Panc1 (cell line): ENCODE measurements at regions of chr12 and their contacts with region 1.

Region 1: GRCh38 chr12:123813349-123813748 is 51.2 kb downstream of the DNAH10 start:
- DNase-seq: no peak
- ATAC-seq: no peak
- H3K4me3 ChIP-seq: no peak overlapping the region
- H3K27ac ChIP-seq: no peak overlapping the region
- H3K4me1 ChIP-seq: no peaks in the 10 kb centered on the region
- H3K27me3 ChIP-seq: no peaks in the 10 kb centered on the region
- CTCF ChIP-seq: no peak

Region 2: DNA sequence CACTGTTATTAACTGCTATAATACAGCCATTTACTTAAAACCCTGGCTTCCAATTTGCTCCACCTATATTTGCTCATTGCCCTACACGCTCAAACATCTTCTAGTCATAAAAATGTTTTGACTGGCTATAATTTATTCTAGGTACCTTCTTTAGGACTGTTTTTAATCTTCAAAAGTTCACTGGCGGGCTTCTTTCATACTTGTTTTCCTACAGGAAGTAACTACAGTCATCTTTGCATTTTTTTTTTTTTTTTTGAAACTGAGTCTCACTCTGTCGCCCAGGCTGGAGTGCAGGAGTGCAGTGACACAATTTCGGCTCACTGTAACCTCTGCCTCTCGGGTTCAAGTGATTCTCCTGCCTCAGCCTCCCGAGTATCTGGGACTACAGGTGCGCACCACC is 612.9 kb before region 1 on chr12:
- CTCF ChIA-PET with region 1: no interaction called
- POLR2A ChIA-PET with region 1: no interaction called
- in situ Hi-C with region 1: no loop called
- intact Hi-C with region 1: no loop called
- DNase-seq: no peak
- ATAC-seq: no peak
- H3K4me3 ChIP-seq: no peak overlapping the region
- H3K27ac ChIP-seq: no peak overlapping the region
- H3K4me1 ChIP-seq: no peaks in the 10 kb centered on the region
- H3K27me3 ChIP-seq: no peaks in the 10 kb centered on the region
- CTCF ChIP-seq: no peak

Region 3: GRCh38 chr12:123519141-123520001 is 294.0 kb before region 1 on chr12:
- CTCF ChIA-PET with region 1: no interaction called
- POLR2A ChIA-PET with region 1: no interaction called
- in situ Hi-C with region 1: no loop called
- intact Hi-C with region 1: no loop called
- DNase-seq: no peak
- ATAC-seq: peak; percentile 47; the same call in 1 of the 2 replicates
- H3K4me3 ChIP-seq: no peak overlapping the region
- H3K27ac ChIP-seq: no peak overlapping the region
- H3K4me1 ChIP-seq: peaks cover 4% of the 10 kb centered on the region; the same call in 1 of the 2 replicates
- H3K27me3 ChIP-seq: no peaks in the 10 kb centered on the region
- CTCF ChIP-seq: no peak

Region 4: DNA sequence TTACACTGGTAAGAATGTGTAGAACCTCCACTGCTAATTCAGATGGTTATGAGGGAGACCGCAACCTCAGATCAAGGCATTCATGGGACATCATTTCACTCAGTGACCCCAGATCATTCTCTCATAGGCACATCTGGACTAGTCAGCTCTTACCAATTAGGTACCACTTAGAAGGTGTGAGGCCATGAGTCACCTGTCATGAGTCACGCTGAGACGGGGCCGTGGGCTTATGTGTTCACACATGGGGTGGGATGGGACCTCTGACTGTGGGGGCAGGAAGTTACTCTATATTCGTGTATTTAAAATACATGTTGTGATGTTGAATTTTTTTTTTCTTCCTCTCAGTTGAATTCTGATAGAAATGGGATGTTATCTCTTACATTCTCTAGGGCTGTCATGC is 103.4 kb after region 1 on chr12:
- CTCF ChIA-PET with region 1: no interaction called
- POLR2A ChIA-PET with region 1: interaction called, 11 read pairs
- in situ Hi-C with region 1: no loop called
- intact Hi-C with region 1: no loop called
- DNase-seq: no peak
- ATAC-seq: no peak
- H3K4me3 ChIP-seq: no peak overlapping the region
- H3K27ac ChIP-seq: no peak overlapping the region
- H3K4me1 ChIP-seq: no peaks in the 10 kb centered on the region
- H3K27me3 ChIP-seq: peaks cover 2% of the 10 kb centered on the region; the same call in 1 of the 2 replicates
- CTCF ChIP-seq: no peak